Calu3 (cell line): ENCODE measurements at regions of chr3 and their contacts with region 1.

Region 1: GRCh38 chr3:36957862-36958686 is 13.2 kb upstream of the TRANK1 start:
- DNase-seq: no peak
- H3K4me3 Mint-ChIP-seq: peak overlapping the region; percentile 13
- H3K27ac Mint-ChIP-seq: no peak overlapping the region
- H3K4me1 Mint-ChIP-seq: peaks cover 12% of the 10 kb centered on the region
- H3K27me3 Mint-ChIP-seq: peaks cover 16% of the 10 kb centered on the region
- CTCF ChIP-seq: no peak

Region 2: GRCh38 chr3:36729204-36730056 is 228.6 kb before region 1 on chr3:
- CTCF ChIA-PET with region 1: no interaction called
- intact Hi-C with region 1: loop called (anchors 2 kb)
- DNase-seq: no peak
- H3K4me3 Mint-ChIP-seq: no peak overlapping the region
- H3K27ac Mint-ChIP-seq: no peak overlapping the region
- H3K4me1 Mint-ChIP-seq: peaks cover 17% of the 10 kb centered on the region
- H3K27me3 Mint-ChIP-seq: peaks cover 28% of the 10 kb centered on the region
- CTCF ChIP-seq: no peak

Region 3: GRCh38 chr3:36792342-36792741 is 165.7 kb before region 1 on chr3:
- CTCF ChIA-PET with region 1: interaction called, 10 read pairs
- intact Hi-C with region 1: loop called (anchors 2 kb)
- DNase-seq: peak; percentile 48
- H3K4me3 Mint-ChIP-seq: no peak overlapping the region
- H3K27ac Mint-ChIP-seq: no peak overlapping the region
- H3K4me1 Mint-ChIP-seq: no peaks in the 10 kb centered on the region
- H3K27me3 Mint-ChIP-seq: peaks cover 75% of the 10 kb centered on the region
- CTCF ChIP-seq: no peak

Region 4: DNA sequence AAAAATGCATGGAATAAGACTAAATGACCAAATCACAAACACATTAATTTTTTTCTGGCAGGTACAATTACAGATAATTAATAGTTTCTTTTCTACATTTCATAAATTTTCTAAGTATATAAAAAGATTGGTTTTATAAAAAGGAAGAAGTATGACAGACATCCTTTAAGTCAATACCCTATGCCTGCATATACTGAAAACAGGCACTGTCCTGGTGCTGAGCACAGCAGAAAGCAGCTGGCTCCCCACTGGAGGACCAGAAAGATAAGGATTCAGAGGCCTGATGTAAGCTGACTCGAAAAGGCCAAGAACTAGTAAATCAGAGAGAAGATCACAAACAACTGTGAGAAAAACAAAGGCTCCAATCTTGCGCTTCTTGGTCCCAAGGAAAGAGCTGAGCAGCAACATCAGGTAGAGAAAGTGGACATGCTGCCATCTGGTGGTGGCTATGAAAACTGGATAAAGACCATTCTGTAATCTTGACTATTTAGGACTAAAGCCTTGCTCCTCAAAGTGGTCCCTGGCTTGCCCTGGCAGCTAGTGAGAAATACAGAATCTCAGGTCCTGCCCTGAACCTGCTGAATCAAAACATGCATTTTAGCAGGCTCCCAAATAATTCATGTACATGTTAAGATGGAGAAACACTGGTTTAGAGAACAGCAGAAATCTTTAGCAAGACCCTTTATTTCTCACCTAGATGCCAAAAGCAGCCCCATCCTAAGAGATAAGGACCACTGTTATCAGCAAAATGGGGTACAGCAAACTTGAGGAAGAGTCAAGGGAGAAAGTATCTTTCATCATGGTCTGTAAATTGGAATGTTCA is 89.2 kb before region 1 on chr3:
- CTCF ChIA-PET with region 1: interaction called, 13 read pairs
- intact Hi-C with region 1: no loop called
- DNase-seq: peak; percentile 43
- H3K4me3 Mint-ChIP-seq: no peak overlapping the region
- H3K27ac Mint-ChIP-seq: no peak overlapping the region
- H3K4me1 Mint-ChIP-seq: no peaks in the 10 kb centered on the region
- H3K27me3 Mint-ChIP-seq: peaks cover 14% of the 10 kb centered on the region
- CTCF ChIP-seq: peak; percentile 66

Region 5: DNA sequence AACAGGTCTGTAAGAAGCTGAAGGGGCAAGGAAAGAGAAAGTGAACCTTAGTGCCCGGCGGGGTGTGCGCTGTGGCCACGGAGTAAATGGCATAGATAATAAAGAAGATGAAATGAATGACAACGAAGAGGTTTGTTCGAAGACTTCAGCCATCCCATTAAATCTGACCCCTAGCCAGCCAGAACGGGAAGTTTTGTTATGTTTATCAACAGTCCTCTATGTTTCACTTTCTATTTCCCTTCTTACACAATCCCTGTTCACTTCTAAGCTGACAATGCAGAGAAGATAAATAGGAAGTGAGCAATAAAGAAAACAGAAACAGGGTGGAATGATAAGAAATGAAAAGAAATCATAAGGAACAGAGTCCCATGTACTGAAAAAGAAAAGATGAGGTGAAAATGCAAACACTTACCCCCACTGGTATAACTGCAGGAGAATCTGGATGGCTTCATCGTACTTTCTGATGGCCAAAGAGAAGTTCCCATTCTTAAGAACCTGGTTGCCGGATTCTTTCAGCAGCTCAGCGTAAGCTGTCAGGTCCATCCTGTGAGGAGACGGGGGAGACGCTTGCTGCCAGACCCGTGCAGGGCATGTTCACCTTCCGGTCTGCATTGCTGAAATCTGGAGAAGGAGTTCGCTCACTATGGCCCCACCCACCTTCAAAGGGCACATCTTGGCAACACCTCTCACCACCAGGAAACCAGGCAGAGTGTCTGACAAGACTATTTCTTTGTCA is 50.0 kb before region 1 on chr3:
- CTCF ChIA-PET with region 1: interaction called, 28 read pairs
- intact Hi-C with region 1: loop called (anchors 2 kb)
- DNase-seq: peak; percentile 67
- H3K4me3 Mint-ChIP-seq: peak overlapping the region; percentile 89
- H3K27ac Mint-ChIP-seq: peak overlapping the region; percentile 27
- H3K4me1 Mint-ChIP-seq: peaks cover 25% of the 10 kb centered on the region
- H3K27me3 Mint-ChIP-seq: no peaks in the 10 kb centered on the region
- CTCF ChIP-seq: no peak

Region 6: GRCh38 chr3:36993326-36994283 is 35.5 kb after region 1 on chr3 and contains the start of gene MLH1:
- CTCF ChIA-PET with region 1: interaction called, 10 read pairs
- intact Hi-C with region 1: no loop called
- DNase-seq: peak; percentile 98
- H3K4me3 Mint-ChIP-seq: no peak within 1 kb of the TSS
- H3K27ac Mint-ChIP-seq: no peak within 1 kb of the TSS
- H3K4me1 Mint-ChIP-seq: no peaks in the 10 kb centered on the region
- H3K27me3 Mint-ChIP-seq: no peaks in the 10 kb centered on the region
- CTCF ChIP-seq: no peak
- total RNA-seq, gene MLH1: 30.1 and 32.8 TPM in 2 replicates